GM13976 (cell line): ENCODE measurements at regions of chr14 and their contacts with region 1.

Region 1: DNA sequence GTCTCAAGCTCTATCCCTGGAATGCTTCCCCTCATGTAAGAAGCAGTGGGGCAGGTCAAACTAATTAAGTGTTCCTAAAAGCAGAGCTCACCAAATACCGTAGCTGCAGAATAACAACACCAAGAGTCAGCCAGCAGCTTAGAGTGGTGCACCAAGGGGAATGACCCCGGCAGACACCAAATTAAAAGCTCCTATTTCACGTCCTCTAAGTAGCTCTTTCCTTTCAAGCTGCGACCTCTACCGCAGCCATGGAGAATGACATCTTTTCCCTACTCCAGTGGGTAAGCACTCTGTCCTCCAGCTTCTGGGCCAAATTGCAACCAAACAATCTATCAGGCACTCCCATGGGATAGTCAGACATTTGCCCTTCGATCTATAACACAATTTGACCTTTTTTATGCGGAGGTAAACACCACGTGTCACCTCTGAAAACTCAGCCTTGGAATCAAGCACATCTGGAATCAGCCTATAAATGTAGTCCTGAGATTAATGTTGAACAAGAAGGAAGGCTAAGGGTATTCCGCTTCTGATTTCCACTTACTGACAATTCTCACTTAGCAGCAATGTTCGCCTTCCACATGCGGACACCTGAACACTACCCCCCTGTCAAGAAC is 67.6 kb upstream of the CDKN3 start:
- DNase-seq: peak; percentile 43
- CTCF ChIP-seq: peak; percentile 61

Region 2: GRCh38 chr14:53412803-53413675 is 916.1 kb before region 1 on chr14:
- in situ Hi-C with region 1: loop called (anchors 25 kb)
- DNase-seq: no peak
- CTCF ChIP-seq: peak; percentile 18

Region 3: DNA sequence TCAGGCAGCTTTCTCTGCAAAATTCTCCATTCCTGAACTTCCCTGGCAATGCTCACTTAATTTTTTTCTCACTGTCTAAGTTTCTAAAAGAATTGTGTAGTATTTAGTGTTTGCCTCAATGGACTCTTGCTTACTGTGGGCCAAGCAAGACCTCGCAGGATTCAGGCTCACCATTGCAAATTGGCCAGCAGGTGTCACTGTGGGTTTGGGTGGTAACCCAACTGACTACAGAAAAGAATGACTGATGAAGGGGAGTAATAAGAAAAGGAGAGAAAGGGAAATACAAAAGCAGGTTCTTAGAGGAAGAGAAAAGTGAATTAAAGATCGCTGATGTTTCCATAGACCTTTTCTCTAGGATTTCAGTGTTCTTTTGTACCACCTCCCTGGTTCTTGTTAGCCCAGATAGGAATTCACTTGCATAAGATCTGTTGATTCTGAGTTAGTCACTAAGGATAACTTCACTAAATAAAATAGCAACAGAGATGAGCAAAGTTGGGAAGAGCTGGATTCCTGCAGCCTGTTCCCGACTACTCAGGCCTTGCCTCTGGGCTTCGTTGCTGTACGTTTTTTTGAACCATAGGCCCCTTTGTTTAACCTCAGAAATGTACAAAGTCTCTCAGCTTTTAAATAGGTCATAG is 789.6 kb before region 1 on chr14:
- in situ Hi-C with region 1: loop called (anchors 25 kb)
- DNase-seq: peak; percentile 31
- CTCF ChIP-seq: peak; percentile 74